ENCODE measurements at regions of chr22 and their contacts with region 1.

Region 1: DNA sequence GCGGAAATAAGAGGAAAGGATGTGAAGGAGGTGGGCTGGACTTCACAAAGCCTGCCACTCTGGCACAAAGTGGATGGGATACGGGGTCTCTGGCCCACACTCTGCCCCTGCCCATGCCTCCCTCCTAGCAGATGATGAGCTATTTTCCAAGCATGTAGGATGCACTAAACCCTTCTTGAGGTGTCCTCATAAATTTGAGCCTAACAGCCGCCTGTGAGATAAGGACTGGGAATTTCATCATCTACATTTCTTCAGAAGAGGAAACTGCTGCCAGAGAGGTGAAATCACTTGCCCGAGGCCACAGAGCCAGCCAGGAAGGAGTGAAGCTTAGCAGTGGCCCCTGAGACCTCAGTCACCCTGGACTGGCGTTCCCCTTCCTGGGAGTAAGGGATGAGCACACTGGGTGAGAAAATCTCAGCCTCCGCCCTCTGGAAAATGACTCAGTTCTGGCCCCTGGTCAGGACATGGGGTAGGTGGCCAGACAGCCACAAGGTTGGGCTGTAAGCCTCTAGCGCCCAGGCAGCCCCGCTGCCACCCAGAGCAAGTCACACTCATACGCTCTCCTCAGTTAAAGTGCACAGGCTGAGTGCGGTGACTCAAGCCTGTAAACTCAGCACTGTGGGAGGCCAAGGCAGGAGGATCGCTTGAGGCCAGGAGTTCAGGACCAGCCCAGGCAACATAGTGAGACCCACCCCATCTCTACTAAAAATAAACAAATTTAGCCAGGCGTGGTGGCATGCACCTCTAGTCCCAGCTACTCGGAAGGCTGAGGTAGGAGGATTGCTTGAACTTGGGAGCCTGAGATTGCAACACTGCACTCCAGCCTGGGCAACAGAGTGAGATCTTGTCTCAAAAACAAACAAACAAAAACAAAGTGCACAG is 27.8 kb downstream of the MB start:
- DNase-seq: peak in 1 of 4 experiments; percentile 7
- ATAC-seq: peak; percentile 76
- H3K4me3 ChIP-seq: no peak overlapping the region
- H3K27ac ChIP-seq: no peak overlapping the region
- H3K4me1 ChIP-seq: peaks cover 5 to 6% of the 10 kb centered on the region in 2 experiments; a peak in 4 of 5 replicates
- H3K27me3 ChIP-seq: no peaks in the 10 kb centered on the region
- CTCF ChIP-seq: no peak
- EP300 ChIP-seq: peak; percentile 55
- POLR2A ChIP-seq: no peak
- RAD21 ChIP-seq: 0 out of 4 replicates have a peak, but pooled peaks of 1 of the 2 experiments have one; percentile 6

Region 2: DNA sequence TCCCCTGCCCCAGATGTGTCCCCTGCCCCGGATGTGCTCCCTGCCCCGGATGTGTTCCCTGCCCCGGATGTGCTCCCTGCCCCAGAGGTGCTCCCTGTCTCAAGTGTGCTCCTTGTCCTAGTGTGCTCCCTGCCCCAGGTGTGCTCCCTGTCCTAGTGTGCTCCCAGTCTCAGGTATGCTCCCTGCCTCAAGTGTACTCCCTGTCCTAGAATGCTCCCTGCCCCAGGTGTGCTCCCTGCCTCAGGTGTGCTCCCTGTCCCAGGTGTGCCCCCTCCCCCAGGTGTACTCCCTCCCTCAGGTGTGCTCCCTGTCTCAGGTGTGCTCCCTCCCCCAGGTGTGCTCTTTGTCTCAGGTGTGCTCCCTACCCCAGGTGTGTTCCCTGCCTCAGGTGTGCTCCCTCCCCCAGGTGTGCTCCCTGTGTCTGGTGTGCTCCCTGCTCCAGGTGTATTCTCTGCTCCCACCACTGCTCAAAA is 97.4 kb before region 1 on chr22:
- CTCF ChIA-PET with region 1: no interaction called
- POLR2A ChIA-PET with region 1: no interaction called
- in situ Hi-C with region 1: loop called (anchors 5 kb)
- intact Hi-C with region 1: loop called (anchors 10 kb)
- DNase-seq: peak in 2 of 4 experiments; percentile 8 to 20
- ATAC-seq: no peak
- H3K4me3 ChIP-seq: no peak overlapping the region
- H3K27ac ChIP-seq: no peak overlapping the region; the same call in 2 of the 3 replicates
- H3K4me1 ChIP-seq: no peaks in the 10 kb centered on the region; a peak in 1 of 5 replicates
- H3K27me3 ChIP-seq: peaks cover 0 to 19% of the 10 kb centered on the region in 2 experiments; a peak in 3 of 5 replicates
- CTCF ChIP-seq: no peak
- EP300 ChIP-seq: no peak
- POLR2A ChIP-seq: no peak
- RAD21 ChIP-seq: no peak

Region 3: GRCh38 chr22:35601743-35602630 is 12.7 kb after region 1 on chr22:
- CTCF ChIA-PET with region 1: no interaction called
- POLR2A ChIA-PET with region 1: no interaction called
- in situ Hi-C with region 1: no loop called
- intact Hi-C with region 1: no loop called
- DNase-seq: no peak
- ATAC-seq: no peak
- H3K4me3 ChIP-seq: no peak overlapping the region
- H3K27ac ChIP-seq: no peak overlapping the region
- H3K4me1 ChIP-seq: peaks cover 0 to 4% of the 10 kb centered on the region in 2 experiments; a peak in 2 of 5 replicates
- H3K27me3 ChIP-seq: peaks cover 3 to 26% of the 10 kb centered on the region in 2 experiments; a peak in 4 of 5 replicates
- CTCF ChIP-seq: no peak
- EP300 ChIP-seq: no peak
- POLR2A ChIP-seq: no peak
- RAD21 ChIP-seq: no peak

Region 4: GRCh38 chr22:35622191-35622913 is 33.0 kb after region 1 on chr22:
- CTCF ChIA-PET with region 1: no interaction called
- POLR2A ChIA-PET with region 1: no interaction called
- in situ Hi-C with region 1: no loop called
- intact Hi-C with region 1: loop called (anchors 5 kb)
- DNase-seq: no peak
- ATAC-seq: no peak
- H3K4me3 ChIP-seq: no peak overlapping the region
- H3K27ac ChIP-seq: no peak overlapping the region
- H3K4me1 ChIP-seq: peaks cover 0 to 2% of the 10 kb centered on the region in 2 experiments; a peak in 1 of 5 replicates
- H3K27me3 ChIP-seq: peaks cover 0 to 5% of the 10 kb centered on the region in 2 experiments; a peak in 2 of 5 replicates
- CTCF ChIP-seq: no peak
- EP300 ChIP-seq: no peak
- POLR2A ChIP-seq: no peak
- RAD21 ChIP-seq: no peak

Region 5: GRCh38 chr22:35697142-35697541 is 107.8 kb after region 1 on chr22:
- CTCF ChIA-PET with region 1: no interaction called
- POLR2A ChIA-PET with region 1: no interaction called
- in situ Hi-C with region 1: no loop called
- intact Hi-C with region 1: no loop called
- DNase-seq: no peak
- ATAC-seq: no peak
- H3K4me3 ChIP-seq: no peak overlapping the region
- H3K27ac ChIP-seq: no peak overlapping the region
- H3K4me1 ChIP-seq: no peaks in the 10 kb centered on the region
- H3K27me3 ChIP-seq: no peaks in the 10 kb centered on the region; a peak in 1 of 5 replicates
- CTCF ChIP-seq: no peak
- EP300 ChIP-seq: no peak
- POLR2A ChIP-seq: no peak
- RAD21 ChIP-seq: no peak

Measured in K562 (cell line).